ENCODE measurements at regions of chr12 and their contacts with region 1.

Region 1: GRCh38 chr12:45665941-45666340 is 63.6 kb upstream of the ARID2 start:
- DNase-seq: no peak
- H3K4me3 ChIP-seq: no peak overlapping the region
- H3K27ac ChIP-seq: no peak overlapping the region
- H3K4me1 ChIP-seq: peaks cover 0 to 9% (median 3%) of the 10 kb centered on the region in 4 donors
- H3K27me3 ChIP-seq: no peaks in the 10 kb centered on the region
- CTCF ChIP-seq: no peak
- EP300 ChIP-seq: no peak
- POLR2A ChIP-seq: no peak

Region 2: DNA sequence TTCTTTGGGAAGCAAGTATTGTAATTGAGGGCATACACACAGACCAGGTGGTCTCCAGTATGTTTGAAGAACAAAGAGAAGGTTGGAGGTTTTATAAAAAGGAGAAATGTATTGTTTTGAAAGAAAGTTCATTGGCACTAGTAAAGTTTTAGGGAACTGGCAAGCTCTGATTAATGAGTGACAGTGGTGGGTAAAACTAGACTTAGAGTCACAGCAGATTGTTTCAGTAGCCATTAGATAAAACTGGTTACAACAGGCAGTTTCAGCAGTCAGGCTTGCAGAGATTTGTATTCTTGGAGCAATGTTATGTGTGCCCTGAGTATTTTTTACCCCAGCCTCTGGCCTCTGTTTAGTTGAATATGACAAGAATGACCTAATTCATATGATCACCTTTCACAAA is 14.4 kb after region 1 on chr12:
- in situ Hi-C with region 1: no loop called
- intact Hi-C with region 1: loop called (anchors 1 kb)
- DNase-seq: no peak
- H3K4me3 ChIP-seq: no peak overlapping the region
- H3K27ac ChIP-seq: no peak overlapping the region
- H3K4me1 ChIP-seq: no peaks in the 10 kb centered on the region
- H3K27me3 ChIP-seq: no peaks in the 10 kb centered on the region
- CTCF ChIP-seq: no peak
- EP300 ChIP-seq: no peak
- POLR2A ChIP-seq: no peak

Measured in transverse colon (tissue), 4 donors.